Activated CD8-positive, alpha-beta T cell treated with anti-CD3 and anti-CD28 coated beads, Interleukin-2, amount 10 ng/mL, durations not matched to agents 7 days and 5 days (primary cell): ENCODE measurements at regions of chr14 and their contacts with region 1.

Region 1: DNA sequence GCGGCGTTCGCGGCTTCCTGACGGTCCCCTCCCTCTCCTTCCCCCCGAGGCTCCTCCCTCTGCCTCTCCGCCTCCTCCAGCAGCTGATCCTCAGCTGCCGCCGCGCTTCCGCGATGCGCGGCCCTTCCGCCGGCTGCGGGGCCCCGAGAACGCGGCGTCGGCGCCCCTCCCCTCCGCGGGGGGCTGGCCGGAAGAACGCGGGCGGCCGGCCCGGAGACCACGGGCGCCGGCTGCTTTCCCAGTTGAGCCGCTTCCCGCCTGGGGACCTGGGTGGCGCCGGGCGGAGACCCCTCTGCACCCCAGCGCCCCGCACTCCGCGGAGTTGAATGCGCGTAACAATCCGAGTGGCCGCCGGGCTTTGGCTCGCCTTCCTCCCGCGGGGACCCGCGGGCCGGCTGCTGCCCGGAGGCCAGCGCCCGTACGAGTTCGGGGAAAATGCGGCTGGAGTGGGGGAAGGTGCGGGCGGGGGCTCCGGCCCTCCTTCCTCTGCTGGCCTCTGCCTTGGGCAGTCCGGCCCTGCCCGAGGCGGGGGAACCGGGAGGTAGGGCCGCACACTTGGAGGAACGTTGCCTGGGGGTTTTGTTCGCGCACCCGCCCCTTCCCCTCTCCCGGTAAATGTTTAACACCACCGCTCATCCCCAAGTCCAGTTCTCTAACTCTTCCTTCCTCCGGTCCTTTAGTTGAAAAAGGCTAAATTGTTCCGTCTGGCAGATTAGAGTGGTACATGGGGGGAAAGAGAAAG is 383 bp upstream of the DCAF5 start:
- DNase-seq: peak; percentile 97
- ATAC-seq: peak; percentile 95
- H3K4me3 Mint-ChIP-seq: peak overlapping the region; percentile 92
- H3K27ac Mint-ChIP-seq: peak overlapping the region; percentile 86
- H3K4me1 Mint-ChIP-seq: peaks cover 31% of the 10 kb centered on the region
- H3K27me3 Mint-ChIP-seq: peaks cover 24% of the 10 kb centered on the region

Region 2: DNA sequence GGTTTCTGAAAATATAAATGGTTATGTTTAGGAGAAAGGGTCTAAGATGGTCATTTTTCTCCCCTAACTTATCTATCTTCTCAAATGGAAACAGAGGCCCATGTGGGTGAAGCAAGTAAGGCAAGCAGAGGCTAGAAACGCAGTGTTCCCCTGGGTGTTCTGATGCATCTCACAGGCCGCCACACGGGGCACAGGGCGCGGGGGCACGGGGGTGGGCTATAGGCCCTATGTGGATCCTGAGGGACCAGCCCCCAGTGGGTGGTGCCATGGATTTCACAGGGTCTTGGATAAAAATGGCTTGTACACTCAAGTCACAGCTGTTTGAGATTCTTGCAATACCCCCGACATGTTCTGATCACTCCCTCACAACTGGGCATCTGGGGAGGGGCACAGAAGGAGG is 191.9 kb before region 1 on chr14:
- CTCF ChIA-PET with region 1: no interaction called
- POLR2A ChIA-PET with region 1: no interaction called
- DNase-seq: no peak
- ATAC-seq: no peak
- H3K4me3 Mint-ChIP-seq: no peak overlapping the region
- H3K27ac Mint-ChIP-seq: no peak overlapping the region
- H3K4me1 Mint-ChIP-seq: peaks cover 74% of the 10 kb centered on the region
- H3K27me3 Mint-ChIP-seq: no peaks in the 10 kb centered on the region

Region 3: GRCh38 chr14:69138189-69138535 is 15.1 kb before region 1 on chr14:
- CTCF ChIA-PET with region 1: interaction called, 18 read pairs
- POLR2A ChIA-PET with region 1: interaction called, 3 read pairs
- DNase-seq: no peak
- ATAC-seq: no peak
- H3K4me3 Mint-ChIP-seq: no peak overlapping the region
- H3K27ac Mint-ChIP-seq: no peak overlapping the region
- H3K4me1 Mint-ChIP-seq: peaks cover 18% of the 10 kb centered on the region
- H3K27me3 Mint-ChIP-seq: no peaks in the 10 kb centered on the region

Region 4: DNA sequence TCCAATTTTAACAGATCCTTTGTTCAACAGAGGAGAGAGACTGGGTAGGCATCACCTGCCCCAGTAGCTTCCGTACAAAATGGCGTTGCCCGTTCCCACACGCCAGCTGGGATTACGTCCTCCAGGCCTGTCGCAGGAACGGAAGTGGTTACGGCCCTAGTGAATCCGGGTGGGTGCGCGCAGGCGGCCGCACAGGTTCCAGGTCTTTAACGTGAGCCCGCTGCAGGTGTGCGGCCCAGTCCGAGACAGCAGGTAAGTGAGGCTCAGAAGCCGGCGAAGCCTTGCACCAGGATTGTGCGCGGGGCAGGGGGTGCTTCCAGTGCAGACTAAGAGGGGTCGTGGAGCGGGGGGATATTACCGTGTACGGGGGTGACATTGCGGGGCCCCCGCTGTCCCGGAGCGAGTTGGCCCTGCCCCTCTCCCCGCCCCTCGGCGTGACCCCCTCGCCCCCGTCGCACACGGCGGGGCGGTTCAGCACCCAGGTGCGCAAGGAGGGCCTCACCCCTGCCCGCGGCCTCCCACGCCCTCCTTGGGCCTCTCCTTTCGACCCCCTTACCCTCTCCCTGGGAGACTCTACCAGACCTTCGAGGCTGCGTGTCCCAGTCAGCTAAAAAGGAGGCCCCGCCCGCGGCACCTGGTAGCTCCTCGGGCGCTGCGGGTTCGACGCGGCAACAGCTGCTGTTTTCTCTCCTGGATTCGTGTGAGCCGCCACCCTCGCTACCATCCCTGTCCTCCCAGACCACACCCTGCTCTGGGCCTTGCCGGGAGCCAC is 38.2 kb after region 1 on chr14 and contains the start of gene EXD2:
- CTCF ChIA-PET with region 1: interaction called, 8 read pairs
- POLR2A ChIA-PET with region 1: interaction called, 10 read pairs
- DNase-seq: peak; percentile 76
- ATAC-seq: peak; percentile 82
- H3K4me3 Mint-ChIP-seq: peak within 1 kb of the TSS; percentile 88
- H3K27ac Mint-ChIP-seq: peak within 1 kb of the TSS; percentile 74
- H3K4me1 Mint-ChIP-seq: peaks cover 20% of the 10 kb centered on the region
- H3K27me3 Mint-ChIP-seq: peaks cover 4% of the 10 kb centered on the region
- total RNA-seq, gene EXD2: 3.4 to 4.2 TPM